SK-N-SH (cell line): ENCODE measurements at regions of chrX and their contacts with region 1.

Region 1: DNA sequence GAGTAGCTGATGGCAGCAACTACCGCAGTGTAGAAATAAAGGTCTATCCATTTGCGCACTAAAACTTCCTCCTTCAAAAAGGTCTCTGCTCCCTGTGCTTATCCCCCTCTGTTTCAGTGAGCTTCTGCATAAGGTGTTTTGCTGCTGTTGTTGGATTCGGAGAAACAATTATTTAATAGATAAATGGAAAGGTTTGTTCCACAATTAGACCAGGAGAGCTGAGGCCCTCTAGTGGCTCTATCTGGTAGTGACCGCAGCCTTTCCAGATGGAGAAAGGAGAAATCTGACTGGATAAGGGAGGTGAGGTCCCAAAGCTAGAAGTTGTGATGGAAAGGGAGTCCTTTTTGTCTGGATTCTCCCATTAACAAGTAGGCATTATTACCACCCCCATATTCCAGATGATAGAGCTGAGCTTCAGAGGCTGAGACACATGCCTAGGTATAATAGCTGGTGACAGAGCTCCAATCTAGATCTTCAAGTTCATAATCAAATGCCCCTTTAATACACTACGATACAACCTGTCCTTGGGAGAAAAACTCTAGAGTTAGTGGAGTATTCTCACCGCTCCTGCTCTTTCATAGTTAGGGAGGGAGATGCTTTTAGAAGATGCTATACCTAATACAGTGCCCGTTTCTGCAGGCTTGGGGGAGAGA is 5.1 kb upstream of the GABRQ start:
- DNase-seq: peak; percentile 49
- H3K4me3 ChIP-seq: no peak overlapping the region
- H3K27ac ChIP-seq: no peak overlapping the region
- H3K4me1 ChIP-seq: no peaks in the 10 kb centered on the region; a peak in 1 of 4 replicates
- H3K27me3 ChIP-seq: no peaks in the 10 kb centered on the region
- CTCF ChIP-seq: peak; percentile 92
- EP300 ChIP-seq: no peak
- RAD21 ChIP-seq: peak; percentile 73

Region 2: GRCh38 chrX:151151665-151152267 is 1480.8 kb before region 1 on chrX:
- CTCF ChIA-PET with region 1: interaction called, 13 read pairs
- POLR2A ChIA-PET with region 1: no interaction called
- DNase-seq: peak; percentile 37
- H3K4me3 ChIP-seq: no peak overlapping the region
- H3K27ac ChIP-seq: no peak overlapping the region
- H3K4me1 ChIP-seq: no peaks in the 10 kb centered on the region
- H3K27me3 ChIP-seq: no peaks in the 10 kb centered on the region; the same call in 1 of the 2 replicates
- CTCF ChIP-seq: peak; percentile 88
- EP300 ChIP-seq: no peak
- RAD21 ChIP-seq: peak; percentile 89

Region 3: GRCh38 chrX:152537373-152537772 is 95.2 kb before region 1 on chrX:
- CTCF ChIA-PET with region 1: no interaction called
- POLR2A ChIA-PET with region 1: no interaction called
- DNase-seq: no peak
- H3K4me3 ChIP-seq: no peak overlapping the region
- H3K27ac ChIP-seq: no peak overlapping the region
- H3K4me1 ChIP-seq: no peaks in the 10 kb centered on the region
- H3K27me3 ChIP-seq: no peaks in the 10 kb centered on the region
- CTCF ChIP-seq: no peak
- EP300 ChIP-seq: no peak
- RAD21 ChIP-seq: no peak

Region 4: GRCh38 chrX:152601848-152602612 is 30.5 kb before region 1 on chrX:
- CTCF ChIA-PET with region 1: interaction called, 13 read pairs
- POLR2A ChIA-PET with region 1: no interaction called
- DNase-seq: peak; percentile 6
- H3K4me3 ChIP-seq: no peak overlapping the region
- H3K27ac ChIP-seq: no peak overlapping the region
- H3K4me1 ChIP-seq: no peaks in the 10 kb centered on the region
- H3K27me3 ChIP-seq: no peaks in the 10 kb centered on the region
- CTCF ChIP-seq: peak; percentile 38
- EP300 ChIP-seq: no peak
- RAD21 ChIP-seq: peak; percentile 29

Region 5: DNA sequence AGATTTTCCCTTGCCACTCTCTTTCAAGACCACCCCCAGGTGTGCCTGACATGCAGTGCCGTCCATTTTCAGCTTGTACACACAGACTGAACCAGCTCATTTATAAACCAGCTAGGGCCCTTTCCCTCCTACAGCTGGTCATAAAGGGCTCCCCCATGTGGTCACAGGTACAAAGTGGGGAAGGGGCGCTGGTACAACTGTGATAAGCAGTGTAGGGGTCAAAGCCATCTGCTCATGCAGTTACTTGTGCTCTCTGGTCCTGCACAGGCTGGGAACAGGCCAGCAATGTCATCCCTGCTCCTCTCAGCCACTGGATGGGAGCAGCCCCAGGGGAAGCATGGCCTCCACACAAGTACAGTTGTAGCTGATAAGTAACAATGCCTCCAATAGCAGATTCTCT is 25.7 kb after region 1 on chrX:
- CTCF ChIA-PET with region 1: interaction called, 45 read pairs
- POLR2A ChIA-PET with region 1: no interaction called
- DNase-seq: peak; percentile 27
- H3K4me3 ChIP-seq: no peak overlapping the region
- H3K27ac ChIP-seq: no peak overlapping the region
- H3K4me1 ChIP-seq: no peaks in the 10 kb centered on the region
- H3K27me3 ChIP-seq: no peaks in the 10 kb centered on the region
- CTCF ChIP-seq: peak; percentile 34
- EP300 ChIP-seq: no peak
- RAD21 ChIP-seq: no peak

Region 6: DNA sequence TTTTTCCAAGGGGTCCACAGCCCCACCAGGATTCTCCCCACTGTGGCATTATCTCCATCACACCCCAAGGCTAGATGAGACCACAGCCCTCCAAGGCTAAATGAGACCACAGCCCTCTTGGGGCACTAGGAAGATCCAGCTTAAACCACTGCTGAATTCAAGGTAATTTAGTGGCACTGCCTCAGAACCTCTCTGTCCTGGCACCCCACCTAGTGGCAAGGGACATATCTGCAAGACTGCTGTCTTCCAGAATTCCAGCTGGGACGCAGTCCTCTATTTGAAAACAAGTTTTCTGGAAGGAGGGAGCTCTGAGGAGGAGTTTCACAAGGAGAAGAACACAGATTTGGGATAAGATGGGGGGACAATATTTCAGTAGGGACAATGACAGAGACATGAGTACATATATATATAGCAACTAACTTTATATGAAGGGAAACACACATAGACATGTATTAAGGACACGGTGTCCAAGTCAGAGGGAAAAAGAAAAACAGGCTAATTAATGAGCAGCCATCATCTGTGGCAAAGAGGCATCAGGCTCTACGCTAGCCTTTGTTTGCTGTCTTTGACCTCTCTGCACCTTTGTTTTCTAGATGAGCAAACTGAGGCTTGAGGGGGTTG is 188.7 kb after region 1 on chrX:
- CTCF ChIA-PET with region 1: interaction called, 24 read pairs
- POLR2A ChIA-PET with region 1: no interaction called
- DNase-seq: peak; percentile 49
- H3K4me3 ChIP-seq: no peak overlapping the region
- H3K27ac ChIP-seq: no peak overlapping the region
- H3K4me1 ChIP-seq: no peaks in the 10 kb centered on the region; a peak in 1 of 4 replicates
- H3K27me3 ChIP-seq: no peaks in the 10 kb centered on the region
- CTCF ChIP-seq: peak; percentile 69
- EP300 ChIP-seq: no peak
- RAD21 ChIP-seq: peak; percentile 75